ENCODE measurements at regions of chr10 and their contacts with region 1.

Region 1: DNA sequence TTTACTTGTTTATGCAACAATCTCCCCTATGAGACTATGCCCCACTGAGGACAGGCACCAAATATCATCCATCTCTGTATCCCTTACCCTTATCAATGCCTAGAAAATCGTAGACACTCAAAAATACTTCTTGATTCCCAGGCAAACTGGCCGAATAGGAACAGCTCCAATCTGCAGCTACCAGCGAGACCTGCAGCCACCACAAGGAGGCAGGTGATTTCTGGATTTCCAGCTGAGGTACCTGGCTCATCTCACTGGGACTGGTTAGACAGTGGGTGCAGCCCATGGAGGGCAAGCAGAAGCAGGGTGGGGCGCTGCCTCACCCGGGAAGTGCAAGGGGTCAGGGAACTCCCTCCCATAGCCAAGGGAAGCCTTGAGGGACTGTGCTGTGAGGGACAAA is 10.8 kb upstream of the PPP1R3C start:
- DNase-seq: no peak
- ATAC-seq: no peak
- H3K4me3 ChIP-seq: no peak overlapping the region
- H3K27ac ChIP-seq: no peak overlapping the region
- H3K4me1 ChIP-seq: no peaks in the 10 kb centered on the region
- H3K27me3 ChIP-seq: no peaks in the 10 kb centered on the region
- CTCF ChIP-seq: no peak

Region 2: GRCh38 chr10:91579329-91579985 is 64.2 kb before region 1 on chr10:
- intact Hi-C with region 1: no loop called
- DNase-seq: no peak
- ATAC-seq: no peak
- H3K4me3 ChIP-seq: no peak overlapping the region
- H3K27ac ChIP-seq: peak overlapping the region; percentile 56
- H3K4me1 ChIP-seq: peaks cover 47% of the 10 kb centered on the region
- H3K27me3 ChIP-seq: no peaks in the 10 kb centered on the region
- CTCF ChIP-seq: no peak

Region 3: DNA sequence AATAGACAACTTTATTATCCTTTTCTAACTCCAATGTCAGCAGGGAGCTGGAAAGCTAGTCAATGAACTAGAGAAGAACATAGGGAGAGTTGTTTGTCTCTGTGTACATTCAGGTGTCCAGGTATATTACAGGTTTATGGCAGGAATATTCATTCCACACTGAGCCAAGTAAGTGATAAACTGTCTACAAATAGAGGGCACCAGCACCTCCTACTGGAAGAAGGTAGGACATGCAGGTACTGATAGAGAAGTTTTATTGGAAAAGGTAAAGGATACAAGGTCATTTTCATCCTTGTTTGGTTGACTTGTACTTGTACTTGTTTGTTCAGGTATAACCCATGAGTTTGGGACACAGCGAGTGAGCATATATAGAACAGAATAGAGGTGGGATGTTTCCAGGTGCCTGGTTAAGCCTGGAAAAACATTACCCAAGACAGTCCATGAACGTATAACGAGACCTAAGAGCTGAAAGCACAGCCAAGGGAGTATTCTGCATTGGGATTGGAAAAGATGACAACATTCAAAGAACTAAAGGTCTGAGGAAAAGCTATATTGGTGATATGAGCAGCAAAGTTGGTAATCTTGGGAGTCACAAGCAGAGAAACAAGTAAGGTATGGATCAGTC is 50.6 kb after region 1 on chr10:
- intact Hi-C with region 1: loop called in 1 of 2 experiments (anchors 10 kb)
- DNase-seq: no peak
- ATAC-seq: no peak
- H3K4me3 ChIP-seq: no peak overlapping the region
- H3K27ac ChIP-seq: no peak overlapping the region
- H3K4me1 ChIP-seq: no peaks in the 10 kb centered on the region
- H3K27me3 ChIP-seq: no peaks in the 10 kb centered on the region
- CTCF ChIP-seq: peak; percentile 51